HepG2 (cell line): ENCODE measurements at regions of chr4 and their contacts with region 1.

Region 1: GRCh38 chr4:23959396-23960148 is 69.7 kb upstream of the PPARGC1A start:
- DNase-seq: no peak
- ATAC-seq: no peak
- H3K4me3 ChIP-seq: no peak overlapping the region
- H3K27ac ChIP-seq: no peak overlapping the region
- H3K4me1 ChIP-seq: peaks cover 23% of the 10 kb centered on the region
- H3K27me3 ChIP-seq: peaks cover 0 to 1% of the 10 kb centered on the region in 2 experiments; a peak in 2 of 5 replicates
- CTCF ChIP-seq: no peak
- EP300 ChIP-seq: no peak
- POLR2A ChIP-seq: no peak
- RAD21 ChIP-seq: no peak

Region 2: GRCh38 chr4:23828020-23828715 is 131.4 kb before region 1 on chr4:
- CTCF ChIA-PET with region 1: no interaction called
- POLR2A ChIA-PET with region 1: no interaction called
- in situ Hi-C with region 1: no loop called
- intact Hi-C with region 1: no loop called
- DNase-seq: no peak
- ATAC-seq: no peak
- H3K4me3 ChIP-seq: no peak overlapping the region
- H3K27ac ChIP-seq: no peak overlapping the region
- H3K4me1 ChIP-seq: no peaks in the 10 kb centered on the region
- H3K27me3 ChIP-seq: no peaks in the 10 kb centered on the region
- CTCF ChIP-seq: no peak
- EP300 ChIP-seq: no peak
- POLR2A ChIP-seq: no peak
- RAD21 ChIP-seq: no peak

Region 3: GRCh38 chr4:23857367-23857959 is 102.1 kb before region 1 on chr4:
- CTCF ChIA-PET with region 1: no interaction called
- POLR2A ChIA-PET with region 1: no interaction called
- in situ Hi-C with region 1: no loop called
- intact Hi-C with region 1: loop called (anchors 5 kb)
- DNase-seq: peak; percentile 49
- ATAC-seq: peak; percentile 45; the same call in 2 of the 3 replicates
- H3K4me3 ChIP-seq: no peak overlapping the region
- H3K27ac ChIP-seq: peak overlapping the region; percentile 59
- H3K4me1 ChIP-seq: peaks cover 88% of the 10 kb centered on the region
- H3K27me3 ChIP-seq: no peaks in the 10 kb centered on the region
- CTCF ChIP-seq: peak; percentile 48
- EP300 ChIP-seq: no peak
- POLR2A ChIP-seq: no peak
- RAD21 ChIP-seq: no peak